Endothelial cell of umbilical vein (primary cell): ENCODE measurements at regions of chr9 and their contacts with region 1.

Region 1: DNA sequence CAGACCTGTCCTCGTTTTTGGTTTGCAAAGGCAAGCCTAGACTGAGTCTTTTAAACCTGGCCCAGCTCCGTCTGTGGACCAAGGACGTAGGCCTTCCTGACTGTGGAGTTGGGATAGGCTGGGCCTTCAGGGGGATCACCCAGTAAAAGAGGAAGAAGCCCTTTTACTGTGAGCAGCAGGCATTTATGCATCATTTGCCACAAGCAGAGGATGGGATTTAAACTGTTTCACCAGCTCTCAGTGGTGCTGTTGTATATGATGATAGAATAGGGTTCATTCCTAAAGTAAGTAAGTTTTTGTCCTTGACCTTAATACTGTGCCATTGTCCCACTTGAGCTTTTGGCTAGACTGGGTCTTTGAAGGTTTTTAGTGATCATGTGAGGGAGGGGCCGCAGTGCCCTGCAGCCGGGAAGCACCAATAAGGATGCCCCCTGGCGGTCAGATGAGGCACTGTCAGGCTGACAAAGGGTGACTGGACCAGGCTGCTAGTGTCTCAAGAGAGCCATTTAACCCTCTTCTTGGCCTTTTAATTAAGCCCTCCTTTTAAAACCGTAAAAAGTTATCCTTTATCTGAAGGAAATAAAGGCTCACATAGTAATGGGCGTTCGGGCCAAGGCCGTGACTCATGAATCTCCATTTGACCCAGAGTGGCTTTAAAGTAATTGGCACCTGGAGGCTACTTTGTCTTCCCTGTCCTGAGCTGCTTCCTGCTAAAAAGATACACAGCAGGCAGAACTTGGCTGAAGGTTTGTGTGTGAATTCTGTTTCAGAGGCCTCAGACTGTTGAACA is 74.0 kb downstream of the UBAP1 start:
- DNase-seq: peak; percentile 52
- H3K4me3 ChIP-seq: no peak overlapping the region
- H3K27ac ChIP-seq: no peak overlapping the region
- H3K4me1 ChIP-seq: no peaks in the 10 kb centered on the region
- H3K27me3 ChIP-seq: no peaks in the 10 kb centered on the region
- CTCF ChIP-seq: peak; percentile 80 to 83
- POLR2A ChIP-seq: no peak

Region 2: DNA sequence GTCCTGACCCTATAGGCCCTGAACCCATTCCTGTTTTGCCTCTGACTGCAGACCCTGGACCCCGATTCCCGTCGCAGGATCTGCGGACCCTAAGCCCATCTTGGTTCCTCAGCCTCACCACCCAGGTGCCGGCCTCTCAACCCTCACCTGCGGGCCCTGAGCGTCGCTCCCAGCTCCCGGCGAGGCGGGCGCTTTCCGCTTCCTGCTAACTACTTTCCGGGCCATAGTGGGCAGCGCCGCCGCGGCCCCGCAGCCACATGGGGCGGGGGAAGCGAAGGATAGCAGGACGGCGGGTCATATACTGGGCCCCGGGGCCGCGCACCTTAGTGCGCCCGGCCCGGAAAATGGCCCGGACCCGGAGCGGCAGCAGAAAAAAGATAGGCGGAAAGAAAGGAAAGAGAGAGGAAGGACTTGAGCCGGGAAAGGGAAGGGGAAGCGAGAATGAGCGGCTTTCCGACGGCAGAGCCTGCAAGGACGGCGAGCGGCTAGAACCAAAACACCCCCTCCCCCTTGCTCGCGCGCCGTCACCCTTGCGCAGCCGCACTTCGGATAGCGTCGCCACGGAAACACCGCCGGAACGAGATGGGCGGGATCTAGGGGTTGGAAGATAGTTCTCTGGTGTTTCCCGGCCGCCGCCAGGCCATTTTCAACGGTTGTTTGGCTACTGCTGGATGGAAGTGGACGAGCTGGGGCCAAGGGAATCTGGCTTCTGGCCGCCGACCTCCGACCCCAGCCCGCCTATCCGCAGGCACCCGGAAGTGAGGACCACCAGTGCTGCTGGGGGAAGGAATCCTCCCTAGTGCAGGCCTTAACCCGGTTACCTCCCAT is 126.4 kb before region 1 on chr9 and contains the start of gene DCAF12:
- CTCF ChIA-PET with region 1: interaction called, 11 read pairs
- POLR2A ChIA-PET with region 1: no interaction called
- dilution Hi-C with region 1: no loop called
- intact Hi-C with region 1: loop called (anchors 1 kb)
- DNase-seq: peak; percentile 95
- H3K4me3 ChIP-seq: peak within 1 kb of the TSS; percentile 64 to 82 (median 75)
- H3K27ac ChIP-seq: peak within 1 kb of the TSS; percentile 49
- H3K4me1 ChIP-seq: peaks cover 15% of the 10 kb centered on the region
- H3K27me3 ChIP-seq: no peaks in the 10 kb centered on the region
- CTCF ChIP-seq: no peak
- POLR2A ChIP-seq: peak; percentile 89
- total RNA-seq, gene DCAF12: 28.2 and 28.4 TPM in 2 replicates

Region 3: GRCh38 chr9:34178520-34179212 is 74.2 kb before region 1 on chr9 and contains the start of gene UBAP1:
- CTCF ChIA-PET with region 1: interaction called, 20 read pairs
- POLR2A ChIA-PET with region 1: no interaction called
- dilution Hi-C with region 1: no loop called
- intact Hi-C with region 1: loop called (anchors 1 kb)
- DNase-seq: peak; percentile 99
- H3K4me3 ChIP-seq: peak within 1 kb of the TSS; percentile 51 to 87 (median 79)
- H3K27ac ChIP-seq: peak within 1 kb of the TSS; percentile 58
- H3K4me1 ChIP-seq: no peaks in the 10 kb centered on the region
- H3K27me3 ChIP-seq: no peaks in the 10 kb centered on the region
- CTCF ChIP-seq: no peak
- POLR2A ChIP-seq: peak; percentile 64
- total RNA-seq, gene UBAP1: 38.0 and 38.8 TPM in 2 replicates

Region 4: GRCh38 chr9:34211395-34211794 is 41.5 kb before region 1 on chr9:
- CTCF ChIA-PET with region 1: no interaction called
- POLR2A ChIA-PET with region 1: no interaction called
- dilution Hi-C with region 1: no loop called
- intact Hi-C with region 1: no loop called
- DNase-seq: no peak
- H3K4me3 ChIP-seq: no peak overlapping the region
- H3K27ac ChIP-seq: no peak overlapping the region
- H3K4me1 ChIP-seq: no peaks in the 10 kb centered on the region
- H3K27me3 ChIP-seq: no peaks in the 10 kb centered on the region
- CTCF ChIP-seq: no peak
- POLR2A ChIP-seq: no peak

Region 5: DNA sequence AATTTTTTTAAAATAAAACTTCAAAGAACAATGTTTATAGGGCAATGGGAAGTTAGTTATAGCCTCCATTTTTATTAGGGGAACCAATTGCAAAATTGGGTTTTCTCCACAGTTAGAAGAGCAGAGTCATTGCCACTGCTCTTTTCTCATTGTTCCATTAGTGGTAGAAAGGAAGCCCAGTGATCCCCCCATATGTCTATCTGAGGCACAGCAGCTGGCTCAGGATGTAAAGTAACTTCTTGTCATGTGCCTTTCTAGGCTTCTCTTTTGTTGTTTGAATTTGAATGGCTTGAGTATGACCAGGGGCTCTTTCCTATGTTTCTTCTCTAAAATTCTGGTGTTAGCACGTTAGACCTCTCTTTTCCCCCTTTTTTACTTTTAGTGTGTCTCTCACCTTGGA is 12.9 kb before region 1 on chr9:
- CTCF ChIA-PET with region 1: interaction called, 12 read pairs
- POLR2A ChIA-PET with region 1: no interaction called
- dilution Hi-C with region 1: no loop called
- intact Hi-C with region 1: no loop called
- DNase-seq: peak; percentile 50
- H3K4me3 ChIP-seq: no peak overlapping the region
- H3K27ac ChIP-seq: no peak overlapping the region
- H3K4me1 ChIP-seq: no peaks in the 10 kb centered on the region
- H3K27me3 ChIP-seq: no peaks in the 10 kb centered on the region
- CTCF ChIP-seq: no peak
- POLR2A ChIP-seq: no peak

Region 6: DNA sequence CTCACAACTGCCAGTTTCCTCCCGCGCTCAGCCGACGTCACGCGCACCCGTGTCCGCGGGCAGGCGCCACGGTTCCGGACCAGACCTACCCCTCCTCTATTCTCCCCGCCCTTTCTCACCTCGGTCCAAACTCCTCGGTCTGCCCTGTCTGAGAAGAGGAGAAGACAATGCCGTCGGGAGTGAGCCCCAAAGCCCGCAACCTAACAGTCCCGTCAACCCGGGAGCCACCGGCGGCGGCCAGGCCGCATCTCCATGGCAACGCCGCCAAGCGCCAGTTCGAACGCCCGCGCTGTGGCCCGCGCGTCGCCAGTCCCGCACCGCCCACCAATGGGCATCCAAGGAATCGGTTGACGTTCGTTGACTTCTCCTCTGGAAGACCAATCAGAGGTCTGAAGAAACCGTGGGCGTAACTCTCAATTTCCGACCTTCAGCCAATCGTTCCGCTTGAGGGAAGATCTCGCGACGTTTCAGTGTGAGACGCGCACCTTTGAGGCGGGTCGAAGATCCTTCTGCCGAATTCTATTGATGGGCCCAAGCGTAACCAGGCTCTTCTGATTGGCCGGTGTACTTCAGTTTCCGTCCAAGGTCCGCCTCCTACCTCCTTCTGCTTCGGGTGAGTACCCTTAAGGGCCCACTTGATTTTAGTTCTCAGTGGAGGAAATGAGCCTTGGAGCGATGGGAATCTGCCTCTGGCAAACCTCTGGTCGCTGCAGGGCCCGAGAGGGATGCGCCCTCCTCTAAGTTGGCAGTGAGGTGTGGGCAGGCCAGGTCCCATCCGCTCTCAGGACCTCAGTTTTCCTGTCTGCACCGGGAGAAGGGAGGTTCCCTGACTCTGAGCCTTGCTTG is 76.3 kb after region 1 on chr9 and contains the starts of genes KIF24 and NUDT2:
- CTCF ChIA-PET with region 1: interaction called, 5 read pairs
- POLR2A ChIA-PET with region 1: no interaction called
- dilution Hi-C with region 1: no loop called
- intact Hi-C with region 1: loop called (anchors 5 kb)
- DNase-seq: peak; percentile 100
- H3K4me3 ChIP-seq: peak within 1 kb of the TSS; percentile 75 to 89 (median 87)
- H3K27ac ChIP-seq: peak within 1 kb of the TSS; percentile 89
- H3K4me1 ChIP-seq: peaks cover 8% of the 10 kb centered on the region
- H3K27me3 ChIP-seq: no peaks in the 10 kb centered on the region
- CTCF ChIP-seq: no peak
- POLR2A ChIP-seq: peak; percentile 91
- total RNA-seq, gene KIF24: 4.5 and 4.8 TPM in 2 replicates
- total RNA-seq, gene NUDT2: 25.1 and 25.2 TPM in 2 replicates